Astrocyte of the cerebellum (primary cell): ENCODE measurements at regions of chr20 and their contacts with region 1.

Region 1: DNA sequence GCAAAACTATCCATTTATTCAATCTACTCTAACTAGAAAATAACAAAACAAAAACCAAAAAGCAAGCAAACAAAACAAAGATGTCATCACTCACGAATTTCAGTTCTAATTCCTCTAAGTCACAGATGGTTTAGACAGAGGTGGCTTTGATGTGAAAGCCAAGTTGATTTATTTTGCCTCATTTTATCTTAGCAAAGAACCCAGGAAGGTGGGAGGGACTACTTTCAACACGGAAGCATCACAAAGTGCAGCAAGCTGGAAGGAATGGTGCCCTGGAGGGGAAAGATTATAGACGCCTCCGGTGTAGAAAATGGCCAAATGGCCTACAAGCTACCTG is 88.4 kb downstream of the LAMP5 start:
- DNase-seq: no peak
- H3K4me3 ChIP-seq: no peak overlapping the region
- CTCF ChIP-seq: no peak

Region 2: DNA sequence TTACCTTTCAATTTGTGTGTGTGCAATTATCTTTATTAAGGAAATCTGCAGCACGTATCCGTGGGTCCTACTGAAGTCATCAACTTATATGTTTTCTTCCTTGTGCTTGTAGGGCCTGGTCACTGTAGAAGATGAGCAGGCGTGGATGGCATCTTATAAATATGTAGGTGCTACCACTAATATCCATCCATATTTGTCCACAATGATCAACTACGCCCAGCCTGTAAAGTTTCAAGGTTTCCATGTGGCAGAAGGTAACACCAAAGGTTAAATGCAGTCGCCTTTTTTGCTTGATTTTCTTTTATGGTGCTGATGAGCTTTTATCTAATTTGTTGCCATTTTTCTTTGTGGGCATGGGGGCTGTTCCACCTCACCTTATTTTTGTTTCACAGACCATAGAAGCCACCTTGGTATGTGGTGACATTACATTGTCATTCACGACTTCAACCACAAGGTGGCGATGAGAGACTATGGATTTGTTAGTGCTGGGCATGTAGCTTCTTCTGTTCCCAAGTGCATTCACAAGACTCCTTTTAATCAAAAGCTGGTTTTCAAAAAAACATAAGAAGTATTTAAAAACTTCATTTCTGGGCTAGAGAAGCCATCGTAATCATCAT is 194.9 kb before region 1 on chr20:
- in situ Hi-C with region 1: loop called (anchors 5 kb)
- DNase-seq: peak; percentile 74
- H3K4me3 ChIP-seq: no peak overlapping the region
- CTCF ChIP-seq: peak; percentile 75

Region 3: DNA sequence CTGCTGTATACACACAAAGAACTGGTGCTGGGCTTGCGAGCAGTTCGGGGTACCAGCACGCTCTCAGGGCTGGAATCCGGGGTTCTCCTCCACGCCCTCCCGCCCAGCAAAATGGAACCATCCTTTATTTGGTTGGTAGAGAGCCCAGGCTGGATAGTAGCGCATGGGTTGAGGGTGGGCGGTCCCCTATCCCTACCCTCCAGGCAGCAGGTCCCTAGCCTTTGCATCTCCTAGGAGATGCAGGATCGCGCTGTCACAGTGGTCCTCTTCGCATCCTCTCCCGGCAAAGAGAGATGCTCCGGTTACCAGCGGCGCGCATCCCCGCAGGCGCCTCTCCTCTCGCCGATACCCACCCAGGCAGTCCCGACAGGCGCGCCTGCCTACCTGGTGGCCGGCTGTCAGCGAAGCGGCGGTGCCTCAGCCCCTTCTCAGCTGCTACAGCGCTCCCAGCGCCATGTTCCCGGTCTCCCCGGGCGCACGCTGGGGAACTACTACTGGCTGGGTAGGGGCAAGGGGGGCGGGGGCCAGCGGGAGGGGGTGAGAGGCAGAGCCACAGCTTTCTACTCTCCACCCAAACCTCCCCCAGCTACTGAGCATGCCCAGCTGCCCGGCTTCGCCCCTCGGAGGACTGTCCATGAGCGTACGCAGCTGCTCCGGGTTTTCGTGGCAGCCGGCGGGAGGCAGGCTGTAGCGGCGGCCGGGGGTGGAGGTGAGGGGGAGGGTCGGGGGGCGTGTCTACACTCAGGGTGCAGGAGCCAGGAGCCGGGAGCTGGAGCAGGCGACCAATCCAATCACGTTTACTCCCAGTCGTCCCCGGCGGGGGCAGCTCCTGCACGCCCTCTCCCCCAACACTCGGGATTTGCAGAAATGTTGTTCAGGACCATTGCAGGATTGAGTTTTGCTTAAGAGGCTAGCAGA is 235.8 kb after region 1 on chr20 and contains the start of gene PAK5:
- in situ Hi-C with region 1: no loop called
- DNase-seq: peak; percentile 32
- H3K4me3 ChIP-seq: peak within 1 kb of the TSS; percentile 52
- CTCF ChIP-seq: no peak